ENCODE measurements at regions of chr5 and their contacts with region 1.

Region 1: GRCh38 chr5:69042915-69043658 is 50.7 kb upstream of the SLC30A5 start:
- DNase-seq: peak; percentile 59
- H3K4me3 ChIP-seq: no peak overlapping the region; the same call in 1 of the 2 replicates
- CTCF ChIP-seq: peak; percentile 57

Region 2: DNA sequence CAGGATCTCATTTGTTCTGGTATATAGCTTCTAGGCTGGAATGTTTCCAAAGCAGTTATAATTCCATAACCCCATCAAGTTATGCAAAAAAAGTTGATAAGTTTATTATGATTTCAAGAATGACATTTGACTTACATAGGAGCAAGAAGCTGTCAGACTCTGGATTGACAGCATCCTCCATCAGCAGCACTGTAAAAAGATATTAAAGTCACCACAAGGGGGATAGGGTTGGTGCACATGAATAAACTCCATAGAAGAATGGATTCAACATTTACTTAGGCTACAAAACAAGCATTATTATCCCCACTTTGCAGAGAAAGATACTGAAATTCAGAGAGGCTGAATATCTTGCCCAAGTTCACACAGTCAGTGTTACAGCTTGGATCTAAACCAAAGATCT is 158.2 kb before region 1 on chr5:
- CTCF ChIA-PET with region 1: no interaction called
- POLR2A ChIA-PET with region 1: no interaction called
- DNase-seq: no peak
- H3K4me3 ChIP-seq: no peak overlapping the region
- CTCF ChIP-seq: no peak

Region 3: DNA sequence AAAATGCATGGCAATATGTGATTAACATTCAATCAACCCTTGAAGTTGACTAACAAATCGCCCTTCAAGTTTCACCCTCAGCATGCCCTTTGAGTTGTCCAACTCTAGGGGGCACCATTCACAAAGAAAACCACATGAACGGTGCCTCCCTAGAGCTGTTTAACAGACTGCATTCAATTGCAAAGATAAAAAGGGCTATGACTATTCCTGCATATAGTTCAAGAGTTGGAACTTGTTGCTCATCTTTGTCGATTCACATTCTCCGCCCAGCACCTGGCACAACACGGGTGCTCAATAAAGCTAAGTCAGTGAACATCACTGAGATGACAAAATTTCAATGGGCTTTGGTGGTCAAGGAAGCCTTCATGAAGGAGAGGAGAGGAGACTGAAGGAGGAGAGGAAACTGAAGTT is 18.8 kb before region 1 on chr5:
- CTCF ChIA-PET with region 1: interaction called, 30 read pairs
- POLR2A ChIA-PET with region 1: no interaction called
- DNase-seq: no peak
- H3K4me3 ChIP-seq: no peak overlapping the region
- CTCF ChIP-seq: peak; percentile 27

Region 4: DNA sequence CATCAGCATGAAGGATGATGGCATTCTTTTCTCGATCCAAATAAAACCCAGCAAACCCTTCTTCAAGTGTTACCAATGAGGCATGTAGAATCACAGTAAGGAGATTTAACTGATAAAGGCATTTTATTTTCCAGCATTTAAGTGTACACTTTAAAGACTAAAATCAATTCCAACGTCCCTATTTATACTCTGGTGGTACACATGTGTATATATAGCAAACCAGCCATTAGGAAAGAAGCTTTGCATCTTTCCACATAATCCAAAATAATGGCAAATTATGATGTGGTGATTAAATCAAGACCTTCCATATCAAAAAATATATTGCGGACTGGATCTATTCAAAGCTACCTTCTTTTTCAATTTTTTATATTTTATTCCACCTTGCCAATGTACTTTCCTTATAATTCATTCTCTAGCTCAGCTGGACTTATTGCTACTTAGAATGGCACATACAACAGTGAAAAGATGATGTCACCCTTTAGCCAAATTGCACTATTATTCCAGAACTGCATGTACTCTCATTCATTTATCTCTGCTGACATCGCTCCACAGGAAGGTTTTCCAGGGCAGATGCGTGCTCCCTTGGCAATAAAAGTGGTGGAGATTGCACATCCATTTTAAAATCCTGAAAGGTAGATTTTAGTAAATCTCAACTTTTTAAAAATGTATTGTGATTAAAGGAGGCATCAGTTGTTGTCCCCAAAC is 12.6 kb before region 1 on chr5:
- CTCF ChIA-PET with region 1: interaction called, 30 read pairs
- POLR2A ChIA-PET with region 1: no interaction called
- DNase-seq: no peak
- H3K4me3 ChIP-seq: no peak overlapping the region
- CTCF ChIP-seq: no peak